CD4-positive, alpha-beta T cell (primary cell): ENCODE measurements at regions of chr7 and their contacts with region 1.

Region 1: GRCh38 chr7:45136106-45137060 is 21.2 kb upstream of the RAMP3 start:
- DNase-seq: peak; percentile 48 to 91 (median 61)
- ATAC-seq: peak; percentile 99
- H3K4me3 ChIP-seq: no peak overlapping the region
- H3K4me3 Mint-ChIP-seq: no peak overlapping the region
- H3K27ac ChIP-seq: no peak overlapping the region
- H3K27ac Mint-ChIP-seq: no peak overlapping the region
- H3K4me1 ChIP-seq: peaks cover 9% of the 10 kb centered on the region
- H3K4me1 Mint-ChIP-seq: peaks cover 5% of the 10 kb centered on the region
- H3K27me3 ChIP-seq: no peaks in the 10 kb centered on the region
- H3K27me3 Mint-ChIP-seq: no peaks in the 10 kb centered on the region
- CTCF ChIP-seq: peak; percentile 80

Region 2: GRCh38 chr7:44087911-44088838 is 1048.2 kb before region 1 on chr7:
- CTCF ChIA-PET with region 1: no interaction called
- POLR2A ChIA-PET with region 1: no interaction called
- intact Hi-C with region 1: no loop called
- DNase-seq: no peak
- ATAC-seq: no peak
- H3K4me3 ChIP-seq: no peak overlapping the region
- H3K4me3 Mint-ChIP-seq: no peak overlapping the region
- H3K27ac ChIP-seq: no peak overlapping the region
- H3K27ac Mint-ChIP-seq: no peak overlapping the region
- H3K4me1 ChIP-seq: no peaks in the 10 kb centered on the region
- H3K4me1 Mint-ChIP-seq: peaks cover 10% of the 10 kb centered on the region
- H3K27me3 ChIP-seq: no peaks in the 10 kb centered on the region
- H3K27me3 Mint-ChIP-seq: no peaks in the 10 kb centered on the region
- CTCF ChIP-seq: no peak

Region 3: DNA sequence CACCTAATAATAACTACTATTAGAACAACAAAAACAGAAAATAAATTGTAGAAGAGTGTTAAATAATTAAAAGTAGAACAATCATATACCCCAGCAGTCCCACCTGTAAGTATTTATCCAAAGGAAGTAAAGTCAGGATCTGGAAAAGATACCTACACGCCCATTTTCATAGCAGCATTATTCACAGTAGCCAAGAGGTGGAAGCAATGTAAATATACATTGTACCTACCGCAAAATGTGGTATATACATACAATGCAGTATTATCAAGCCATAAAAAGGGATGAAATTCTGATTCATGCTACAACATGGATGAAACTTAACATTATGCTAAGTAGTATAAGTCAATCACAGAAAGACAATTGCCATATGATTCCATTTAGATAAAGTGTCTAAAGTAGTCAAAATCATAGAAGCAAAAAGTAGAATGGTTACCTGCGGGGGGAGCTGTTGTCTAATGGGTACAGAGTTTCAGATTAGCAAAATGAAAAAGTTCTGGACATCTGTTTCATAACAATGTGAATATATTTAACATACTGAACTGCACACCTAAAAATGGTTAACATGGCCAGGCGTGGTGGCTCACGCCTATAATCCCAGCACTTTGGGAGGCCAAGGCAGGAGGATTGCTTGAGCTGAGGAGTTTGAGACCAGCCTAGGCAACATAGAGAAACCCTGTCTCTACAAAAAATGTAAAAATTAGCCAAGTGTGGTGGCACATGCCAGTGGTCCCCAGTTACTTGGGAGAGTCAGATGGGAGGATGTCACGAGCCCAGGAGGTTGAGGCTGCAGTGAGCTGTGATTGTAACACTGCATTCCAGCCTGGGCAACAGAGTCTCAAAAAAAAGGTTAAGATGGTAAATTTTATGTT is 548.3 kb before region 1 on chr7:
- CTCF ChIA-PET with region 1: no interaction called
- POLR2A ChIA-PET with region 1: no interaction called
- intact Hi-C with region 1: loop called (anchors 1 kb)
- DNase-seq: peak; percentile 30 to 81 (median 57)
- ATAC-seq: peak; percentile 76
- H3K4me3 ChIP-seq: no peak overlapping the region
- H3K4me3 Mint-ChIP-seq: no peak overlapping the region
- H3K27ac ChIP-seq: no peak overlapping the region
- H3K27ac Mint-ChIP-seq: no peak overlapping the region
- H3K4me1 ChIP-seq: peaks cover 2% of the 10 kb centered on the region
- H3K4me1 Mint-ChIP-seq: peaks cover 7% of the 10 kb centered on the region
- H3K27me3 ChIP-seq: no peaks in the 10 kb centered on the region
- H3K27me3 Mint-ChIP-seq: no peaks in the 10 kb centered on the region
- CTCF ChIP-seq: peak; percentile 88

Region 4: DNA sequence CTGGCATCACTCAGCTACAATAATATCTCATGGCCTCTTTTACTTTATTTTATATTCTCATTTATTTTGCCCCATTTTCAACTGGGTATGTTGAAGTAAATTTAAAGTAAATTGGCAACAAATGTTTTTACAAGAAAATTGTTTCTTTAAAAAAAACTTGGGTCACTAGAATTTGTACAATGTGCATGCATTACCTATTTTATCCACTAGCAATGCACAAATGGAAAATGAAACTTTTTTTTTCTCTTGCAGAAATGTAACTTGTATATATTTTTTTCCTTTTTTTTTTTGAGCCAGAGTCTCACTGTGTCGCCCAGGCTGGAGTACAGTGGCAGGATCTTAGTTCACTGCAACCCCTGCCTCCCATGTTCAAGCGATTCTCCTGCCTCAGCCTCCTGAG is 278.2 kb before region 1 on chr7:
- CTCF ChIA-PET with region 1: interaction called, 16 read pairs
- POLR2A ChIA-PET with region 1: interaction called, 6 read pairs
- intact Hi-C with region 1: loop called (anchors 1 kb)
- DNase-seq: no peak
- ATAC-seq: no peak
- H3K4me3 ChIP-seq: no peak overlapping the region
- H3K4me3 Mint-ChIP-seq: no peak overlapping the region
- H3K27ac ChIP-seq: no peak overlapping the region
- H3K27ac Mint-ChIP-seq: no peak overlapping the region
- H3K4me1 ChIP-seq: peaks cover 6% of the 10 kb centered on the region
- H3K4me1 Mint-ChIP-seq: peaks cover 6% of the 10 kb centered on the region
- H3K27me3 ChIP-seq: no peaks in the 10 kb centered on the region
- H3K27me3 Mint-ChIP-seq: peaks cover 5% of the 10 kb centered on the region
- CTCF ChIP-seq: no peak

Region 5: GRCh38 chr7:44921607-44922359 is 214.6 kb before region 1 on chr7:
- CTCF ChIA-PET with region 1: interaction called, 7 read pairs
- POLR2A ChIA-PET with region 1: interaction called, 4 read pairs
- intact Hi-C with region 1: loop called (anchors 1 kb)
- DNase-seq: peak; percentile 88 to 98 (median 94)
- ATAC-seq: peak; percentile 98
- H3K4me3 ChIP-seq: no peak overlapping the region
- H3K4me3 Mint-ChIP-seq: no peak overlapping the region
- H3K27ac ChIP-seq: no peak overlapping the region
- H3K27ac Mint-ChIP-seq: no peak overlapping the region
- H3K4me1 ChIP-seq: peaks cover 9% of the 10 kb centered on the region
- H3K4me1 Mint-ChIP-seq: peaks cover 4% of the 10 kb centered on the region
- H3K27me3 ChIP-seq: no peaks in the 10 kb centered on the region
- H3K27me3 Mint-ChIP-seq: peaks cover 1% of the 10 kb centered on the region
- CTCF ChIP-seq: peak; percentile 85

Region 6: GRCh38 chr7:44973610-44974401 is 162.6 kb before region 1 on chr7:
- CTCF ChIA-PET with region 1: interaction called, 60 read pairs
- POLR2A ChIA-PET with region 1: interaction called, 25 read pairs
- intact Hi-C with region 1: loop called (anchors 1 kb)
- DNase-seq: peak; percentile 45 to 78 (median 65)
- ATAC-seq: peak; percentile 48
- H3K4me3 ChIP-seq: no peak overlapping the region
- H3K4me3 Mint-ChIP-seq: peak overlapping the region; percentile 25
- H3K27ac ChIP-seq: peak overlapping the region in 1 of 2 donors; percentile 1
- H3K27ac Mint-ChIP-seq: peak overlapping the region; percentile 95
- H3K4me1 ChIP-seq: peaks cover 73% of the 10 kb centered on the region
- H3K4me1 Mint-ChIP-seq: peaks cover 45% of the 10 kb centered on the region
- H3K27me3 ChIP-seq: no peaks in the 10 kb centered on the region
- H3K27me3 Mint-ChIP-seq: no peaks in the 10 kb centered on the region
- CTCF ChIP-seq: peak; percentile 67

Region 7: GRCh38 chr7:45039131-45039530 is 97.3 kb before region 1 on chr7:
- CTCF ChIA-PET with region 1: no interaction called
- POLR2A ChIA-PET with region 1: no interaction called
- intact Hi-C with region 1: no loop called
- DNase-seq: no peak
- ATAC-seq: no peak
- H3K4me3 ChIP-seq: no peak overlapping the region
- H3K4me3 Mint-ChIP-seq: peak overlapping the region; percentile 15
- H3K27ac ChIP-seq: peak overlapping the region in 1 of 2 donors; percentile 21
- H3K27ac Mint-ChIP-seq: peak overlapping the region; percentile 88
- H3K4me1 ChIP-seq: peaks cover 51% of the 10 kb centered on the region
- H3K4me1 Mint-ChIP-seq: peaks cover 72% of the 10 kb centered on the region
- H3K27me3 ChIP-seq: no peaks in the 10 kb centered on the region
- H3K27me3 Mint-ChIP-seq: no peaks in the 10 kb centered on the region
- CTCF ChIP-seq: no peak

Region 8: GRCh38 chr7:45054442-45054841 is 81.9 kb before region 1 on chr7:
- CTCF ChIA-PET with region 1: no interaction called
- POLR2A ChIA-PET with region 1: no interaction called
- intact Hi-C with region 1: no loop called
- DNase-seq: no peak
- ATAC-seq: no peak
- H3K4me3 ChIP-seq: no peak overlapping the region
- H3K4me3 Mint-ChIP-seq: no peak overlapping the region
- H3K27ac ChIP-seq: no peak overlapping the region
- H3K27ac Mint-ChIP-seq: peak overlapping the region; percentile 81
- H3K4me1 ChIP-seq: peaks cover 40% of the 10 kb centered on the region
- H3K4me1 Mint-ChIP-seq: peaks cover 78% of the 10 kb centered on the region
- H3K27me3 ChIP-seq: no peaks in the 10 kb centered on the region
- H3K27me3 Mint-ChIP-seq: no peaks in the 10 kb centered on the region
- CTCF ChIP-seq: no peak

Region 9: DNA sequence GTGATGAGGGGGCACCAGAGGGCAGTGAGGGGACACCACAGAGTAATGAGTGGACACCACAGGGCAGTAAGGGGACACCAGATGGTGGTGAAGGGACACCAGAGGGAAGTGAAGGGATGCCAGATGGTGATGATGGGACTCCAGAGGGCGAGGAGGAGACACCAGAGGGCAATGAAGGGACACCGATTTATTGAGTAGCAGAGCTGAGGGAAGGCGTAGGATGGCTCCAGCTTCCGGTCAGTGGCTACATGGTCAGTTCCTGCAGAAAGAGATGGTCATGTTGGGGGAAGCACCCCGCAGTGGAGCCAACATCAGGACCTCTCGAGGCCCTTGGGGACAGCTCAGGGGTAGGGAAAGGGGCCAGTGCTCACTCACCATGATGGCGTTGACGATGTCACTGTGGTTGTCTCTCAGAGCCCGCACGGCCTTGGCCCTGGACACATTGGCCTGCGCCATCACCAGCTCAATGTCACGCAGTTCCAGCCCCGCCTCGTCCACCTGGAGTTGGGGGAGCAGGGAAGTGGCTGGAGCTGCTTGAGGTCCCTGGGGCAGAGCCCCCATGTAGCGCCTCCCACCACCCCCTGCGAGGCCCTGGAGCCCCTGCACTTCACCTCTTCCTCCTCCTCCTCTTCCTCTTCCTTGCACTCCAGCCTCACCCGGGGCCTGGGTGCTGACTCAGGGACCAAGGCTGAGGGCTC is 56.0 kb before region 1 on chr7:
- CTCF ChIA-PET with region 1: interaction called, 5 read pairs
- POLR2A ChIA-PET with region 1: no interaction called
- intact Hi-C with region 1: loop called (anchors 1 to 2 kb)
- DNase-seq: peak in 3 of 14 experiments; percentile 29 to 41 (median 30)
- ATAC-seq: peak; percentile 34
- H3K4me3 ChIP-seq: no peak overlapping the region
- H3K4me3 Mint-ChIP-seq: no peak overlapping the region
- H3K27ac ChIP-seq: no peak overlapping the region
- H3K27ac Mint-ChIP-seq: peak overlapping the region; percentile 63
- H3K4me1 ChIP-seq: no peaks in the 10 kb centered on the region
- H3K4me1 Mint-ChIP-seq: no peaks in the 10 kb centered on the region
- H3K27me3 ChIP-seq: no peaks in the 10 kb centered on the region
- H3K27me3 Mint-ChIP-seq: no peaks in the 10 kb centered on the region
- CTCF ChIP-seq: no peak